Testis (tissue), 5 donors: ENCODE measurements at regions of chr5 and their contacts with region 1.

Region 1: GRCh38 chr5:98905857-98906690 is 22.7 kb downstream of the CHD1 start:
- DNase-seq: no peak
- H3K4me3 ChIP-seq: no peak overlapping the region
- H3K27ac ChIP-seq: no peak overlapping the region
- H3K4me1 ChIP-seq: no peaks in the 10 kb centered on the region
- H3K27me3 ChIP-seq: no peaks in the 10 kb centered on the region
- CTCF ChIP-seq: peak; percentile 53 to 72 (median 59)
- POLR2A ChIP-seq: no peak

Region 2: DNA sequence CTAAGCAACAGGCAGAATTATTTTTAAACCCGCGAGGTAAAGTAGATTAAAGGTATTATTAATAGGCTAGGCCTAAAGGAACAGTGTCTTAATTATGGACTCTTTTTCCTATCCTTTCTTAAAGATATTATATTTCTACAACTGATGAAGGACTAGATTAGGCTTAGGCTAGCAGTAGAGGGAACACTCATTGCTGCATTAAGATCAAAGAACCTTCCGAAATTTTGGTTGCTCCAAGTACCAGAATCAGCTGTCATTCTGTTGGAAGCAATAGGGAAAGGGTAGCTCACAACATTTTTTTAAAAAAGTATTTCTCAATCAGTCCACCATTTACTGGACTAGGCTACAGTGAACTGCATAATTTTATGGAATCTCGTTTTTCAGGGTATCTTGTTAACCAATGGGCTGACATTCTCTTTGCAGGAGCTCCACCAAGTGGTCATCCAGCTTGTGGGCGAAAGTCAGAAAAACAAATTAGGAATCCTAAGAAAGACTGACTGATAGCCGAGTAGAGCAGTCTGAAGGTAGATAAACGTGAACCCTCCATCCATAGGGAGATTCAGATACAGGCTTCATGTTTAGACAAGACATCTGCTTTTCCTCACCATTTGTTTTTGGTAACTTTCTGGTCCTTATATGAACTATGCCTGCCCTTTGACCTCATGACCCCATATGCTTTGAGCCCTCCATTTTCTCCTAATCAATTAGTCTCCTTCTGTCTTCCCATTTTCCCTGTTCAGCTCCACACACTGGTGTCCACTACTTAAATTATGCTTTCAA is 126.3 kb after region 1 on chr5:
- intact Hi-C with region 1: loop called (anchors 5 kb)
- DNase-seq: peak; percentile 79
- H3K4me3 ChIP-seq: no peak overlapping the region
- H3K27ac ChIP-seq: no peak overlapping the region
- H3K4me1 ChIP-seq: no peaks in the 10 kb centered on the region
- H3K27me3 ChIP-seq: no peaks in the 10 kb centered on the region
- CTCF ChIP-seq: peak; percentile 35 to 66 (median 63)
- POLR2A ChIP-seq: no peak